ENCODE measurements at regions of chr7 and their contacts with region 1.

Region 1: DNA sequence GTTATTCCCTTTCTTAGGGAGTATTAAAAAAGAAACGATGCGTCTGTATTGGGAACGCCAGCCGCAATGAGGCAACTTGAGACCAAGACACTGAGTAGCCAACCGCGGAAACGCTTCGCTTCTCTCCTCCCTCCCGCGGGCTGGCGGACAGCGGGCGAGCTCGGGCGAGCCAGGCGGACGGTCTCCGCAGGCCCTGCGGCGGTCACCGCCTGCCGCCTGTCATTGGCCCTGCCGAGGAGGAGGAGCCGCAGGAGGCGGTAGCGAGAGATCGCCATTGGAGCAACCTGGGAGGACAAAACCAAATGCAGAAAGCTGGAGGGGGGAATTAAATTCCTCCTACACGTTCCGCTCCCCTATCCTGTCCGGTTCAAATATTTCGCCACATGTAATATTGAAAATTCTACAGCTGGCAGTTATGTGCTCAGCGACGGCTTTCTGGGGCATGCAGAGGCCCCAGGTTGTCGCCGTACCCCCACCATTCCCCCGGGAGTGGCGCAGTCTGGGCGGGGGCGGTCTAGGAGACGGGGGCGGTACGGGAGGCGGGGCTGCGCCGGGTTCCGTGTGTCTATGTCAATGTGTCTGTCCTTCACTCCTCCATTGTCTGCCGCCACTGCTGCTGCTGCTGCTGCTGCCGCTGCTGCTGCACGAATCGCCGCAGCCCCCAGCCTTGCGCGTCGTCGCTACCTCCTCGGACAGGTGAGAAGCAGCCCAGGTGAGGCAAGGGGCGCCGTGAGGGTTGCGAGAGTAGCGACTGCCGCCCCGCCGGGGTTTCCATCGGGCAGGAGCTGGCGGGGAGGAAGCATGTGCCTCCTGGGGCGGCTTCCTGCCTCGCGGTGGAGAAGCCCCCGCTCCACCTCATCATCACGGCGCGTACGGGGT is at the starts of genes ANKMY2 and BZW2:
- DNase-seq: peak; percentile 99
- H3K4me3 Mint-ChIP-seq: peak within 1 kb of the TSS; percentile 89
- H3K27ac Mint-ChIP-seq: peak within 1 kb of the TSS; percentile 88
- H3K4me1 Mint-ChIP-seq: peaks cover 48% of the 10 kb centered on the region
- H3K27me3 Mint-ChIP-seq: no peaks in the 10 kb centered on the region
- CTCF ChIP-seq: no peak
- total RNA-seq, gene ANKMY2: 29.9 and 32.5 TPM in 2 replicates
- total RNA-seq, gene BZW2: 185 and 194 TPM in 2 replicates

Region 2: GRCh38 chr7:15305002-15305600 is 1340.7 kb before region 1 on chr7:
- CTCF ChIA-PET with region 1: no interaction called
- intact Hi-C with region 1: no loop called
- DNase-seq: peak; percentile 78
- H3K4me3 Mint-ChIP-seq: no peak overlapping the region
- H3K27ac Mint-ChIP-seq: no peak overlapping the region
- H3K4me1 Mint-ChIP-seq: no peaks in the 10 kb centered on the region
- H3K27me3 Mint-ChIP-seq: no peaks in the 10 kb centered on the region
- CTCF ChIP-seq: peak; percentile 68

Region 3: GRCh38 chr7:16604054-16604453 is 41.8 kb before region 1 on chr7:
- CTCF ChIA-PET with region 1: no interaction called
- intact Hi-C with region 1: loop called (anchors 5 kb)
- DNase-seq: no peak
- H3K4me3 Mint-ChIP-seq: no peak overlapping the region
- H3K27ac Mint-ChIP-seq: peak overlapping the region; percentile 0
- H3K4me1 Mint-ChIP-seq: peaks cover 59% of the 10 kb centered on the region
- H3K27me3 Mint-ChIP-seq: no peaks in the 10 kb centered on the region
- CTCF ChIP-seq: no peak

Region 4: GRCh38 chr7:16668049-16668858 is 22.4 kb after region 1 on chr7:
- CTCF ChIA-PET with region 1: interaction called, 10 read pairs
- intact Hi-C with region 1: loop called (anchors 2 kb)
- DNase-seq: peak; percentile 89
- H3K4me3 Mint-ChIP-seq: peak overlapping the region; percentile 40
- H3K27ac Mint-ChIP-seq: peak overlapping the region; percentile 85
- H3K4me1 Mint-ChIP-seq: peaks cover 58% of the 10 kb centered on the region
- H3K27me3 Mint-ChIP-seq: no peaks in the 10 kb centered on the region
- CTCF ChIP-seq: no peak

Region 5: GRCh38 chr7:16695621-16696237 is 49.9 kb after region 1 on chr7:
- CTCF ChIA-PET with region 1: no interaction called
- intact Hi-C with region 1: no loop called
- DNase-seq: peak; percentile 71
- H3K4me3 Mint-ChIP-seq: no peak overlapping the region
- H3K27ac Mint-ChIP-seq: no peak overlapping the region
- H3K4me1 Mint-ChIP-seq: peaks cover 7% of the 10 kb centered on the region
- H3K27me3 Mint-ChIP-seq: no peaks in the 10 kb centered on the region
- CTCF ChIP-seq: peak; percentile 83

Measured in Calu3 (cell line).